Breast epithelium (tissue), 4 donors: ENCODE measurements at regions of chr18 and their contacts with region 1.

Region 1: GRCh38 chr18:42255908-42256765 is 301.1 kb downstream of the PIK3C3 start:
- DNase-seq: no peak
- H3K4me3 ChIP-seq: no peak overlapping the region
- H3K27ac ChIP-seq: no peak overlapping the region
- H3K4me1 ChIP-seq: no peaks in the 10 kb centered on the region
- H3K27me3 ChIP-seq: no peaks in the 10 kb centered on the region
- CTCF ChIP-seq: no peak
- POLR2A ChIP-seq: no peak

Region 2: DNA sequence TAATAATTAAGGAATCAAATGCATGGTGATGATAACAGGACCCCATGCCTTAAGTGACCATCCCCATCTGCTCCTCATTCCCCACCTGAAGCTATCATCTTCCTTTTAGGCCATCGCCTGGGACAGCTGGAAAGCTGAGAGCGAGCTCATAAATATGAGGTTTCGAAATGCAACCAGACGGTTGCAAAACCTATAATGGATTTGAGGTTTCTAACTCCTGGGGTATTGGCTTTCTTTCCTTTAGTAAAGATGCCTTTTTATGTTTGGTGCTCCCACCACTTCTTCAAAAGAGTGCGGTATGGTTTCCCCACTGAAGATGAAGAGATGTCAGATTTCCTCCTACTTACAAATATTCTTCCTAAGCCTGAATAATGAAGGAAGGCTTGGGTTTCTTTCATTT is 1890.6 kb before region 1 on chr18:
- intact Hi-C with region 1: no loop called
- DNase-seq: no peak
- H3K4me3 ChIP-seq: no peak overlapping the region
- H3K27ac ChIP-seq: no peak overlapping the region
- H3K4me1 ChIP-seq: no peaks in the 10 kb centered on the region
- H3K27me3 ChIP-seq: no peaks in the 10 kb centered on the region
- CTCF ChIP-seq: no peak
- POLR2A ChIP-seq: no peak

Region 3: GRCh38 chr18:42131066-42131929 is 124.8 kb before region 1 on chr18:
- intact Hi-C with region 1: loop called (anchors 5 kb)
- DNase-seq: no peak
- H3K4me3 ChIP-seq: no peak overlapping the region
- H3K27ac ChIP-seq: no peak overlapping the region
- H3K4me1 ChIP-seq: no peaks in the 10 kb centered on the region
- H3K27me3 ChIP-seq: no peaks in the 10 kb centered on the region
- CTCF ChIP-seq: no peak
- POLR2A ChIP-seq: no peak

Region 4: GRCh38 chr18:42274488-42275137 is 18.5 kb after region 1 on chr18:
- intact Hi-C with region 1: no loop called
- DNase-seq: no peak
- H3K4me3 ChIP-seq: no peak overlapping the region
- H3K27ac ChIP-seq: peak overlapping the region in 1 of 2 donors; percentile 55
- H3K4me1 ChIP-seq: no peaks in the 10 kb centered on the region
- H3K27me3 ChIP-seq: no peaks in the 10 kb centered on the region
- CTCF ChIP-seq: no peak
- POLR2A ChIP-seq: no peak